Activated CD8-positive, alpha-beta T cell treated with anti-CD3 and anti-CD28 coated beads for 36 hours (primary cell): ENCODE measurements at regions of chr9 and their contacts with region 1.

Region 1: DNA sequence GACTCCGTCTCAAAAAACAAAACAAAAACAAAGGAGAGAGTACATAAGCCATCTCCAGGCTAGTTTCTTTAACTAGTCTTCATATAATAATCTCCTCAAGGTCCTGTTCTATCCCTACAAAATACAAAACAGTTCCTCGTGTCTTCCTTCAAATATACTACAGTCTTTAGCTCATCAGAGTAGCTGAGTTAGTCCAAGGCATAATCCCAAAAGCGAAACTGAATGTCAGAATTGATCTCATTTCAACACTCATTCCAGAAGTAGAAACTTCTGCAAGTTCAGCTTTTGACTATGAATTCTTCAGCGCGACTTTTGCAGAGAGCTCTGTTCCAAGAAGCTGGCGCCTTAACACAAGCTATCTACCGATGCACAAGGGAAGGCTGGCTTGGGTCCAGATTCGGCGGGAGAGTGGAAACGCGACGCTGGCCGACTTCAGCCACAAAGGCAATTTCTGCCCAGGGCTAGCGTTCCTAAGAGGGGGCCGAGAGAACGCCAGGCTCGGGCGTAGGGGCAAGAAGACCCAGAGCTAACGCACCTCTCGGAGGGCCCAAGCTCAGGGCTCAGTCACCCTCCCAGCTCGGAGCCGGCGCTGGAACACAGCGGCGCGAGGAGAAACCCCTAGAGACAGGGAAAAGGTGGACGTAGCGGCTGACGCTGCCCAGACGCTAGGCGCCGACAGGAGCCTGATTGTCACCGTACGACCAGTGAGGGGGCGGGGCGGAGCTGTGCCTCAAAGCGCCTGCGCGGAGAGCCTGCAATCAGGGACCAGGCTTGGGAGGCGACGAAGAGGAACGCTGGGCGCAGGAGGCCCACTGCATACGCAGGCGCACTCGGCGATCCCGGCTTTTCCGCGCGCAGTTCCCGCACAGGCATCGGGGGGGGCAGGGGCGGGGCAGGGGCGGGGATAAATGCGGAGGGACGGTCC is 469 bp upstream of the HSDL2 start:
- DNase-seq: peak; percentile 99
- ATAC-seq: peak; percentile 94
- H3K4me3 Mint-ChIP-seq: peak overlapping the region; percentile 87
- H3K27ac Mint-ChIP-seq: peak overlapping the region; percentile 98
- H3K4me1 Mint-ChIP-seq: peaks cover 32% of the 10 kb centered on the region
- H3K27me3 Mint-ChIP-seq: no peaks in the 10 kb centered on the region
- CTCF ChIP-seq: no peak

Region 2: GRCh38 chr9:112135706-112136105 is 243.7 kb before region 1 on chr9:
- CTCF ChIA-PET with region 1: no interaction called
- POLR2A ChIA-PET with region 1: no interaction called
- intact Hi-C with region 1: no loop called
- DNase-seq: no peak
- ATAC-seq: no peak
- H3K4me3 Mint-ChIP-seq: no peak overlapping the region
- H3K27ac Mint-ChIP-seq: no peak overlapping the region
- H3K4me1 Mint-ChIP-seq: no peaks in the 10 kb centered on the region
- H3K27me3 Mint-ChIP-seq: no peaks in the 10 kb centered on the region
- CTCF ChIP-seq: no peak

Region 3: DNA sequence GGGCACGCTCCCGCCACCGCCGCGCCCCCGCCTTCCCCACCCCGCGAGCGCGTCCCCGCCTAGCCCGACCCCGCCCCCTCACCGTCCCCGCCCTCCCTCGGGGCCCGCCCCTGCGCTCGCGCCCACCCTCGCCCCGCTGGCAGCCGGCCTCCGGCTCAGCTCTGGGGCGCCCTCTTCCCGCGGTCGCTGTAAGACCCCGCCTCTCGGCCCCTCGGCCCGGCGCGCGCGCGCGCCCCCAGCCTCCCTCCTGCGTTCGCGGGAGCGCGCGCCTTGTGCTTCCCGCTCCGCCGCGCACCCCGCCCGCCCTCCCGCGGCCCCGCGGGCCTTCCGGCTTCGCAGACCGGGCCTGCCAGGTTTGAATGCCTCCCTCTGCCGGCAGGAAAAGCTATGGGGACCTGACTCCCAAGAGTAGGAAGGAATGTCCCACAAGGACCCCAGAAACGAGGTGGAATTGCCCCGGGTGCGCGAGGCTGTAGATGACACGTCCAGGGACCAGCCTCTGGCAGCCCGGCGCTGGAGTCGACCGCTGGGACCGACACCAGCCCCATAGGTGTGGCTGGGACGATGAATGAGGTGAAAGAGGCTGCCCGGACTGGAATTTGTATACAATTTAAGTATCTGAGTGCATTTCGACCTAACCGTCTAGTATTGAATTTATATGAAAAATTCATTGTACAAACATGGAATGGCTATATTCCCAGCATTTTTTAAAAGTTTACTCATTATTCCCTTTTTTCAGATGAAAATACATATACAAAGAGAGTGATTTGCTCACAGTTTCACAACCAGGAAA is 45.6 kb before region 1 on chr9:
- CTCF ChIA-PET with region 1: interaction called, 4 read pairs
- POLR2A ChIA-PET with region 1: interaction called, 13 read pairs
- intact Hi-C with region 1: no loop called
- DNase-seq: peak; percentile 94
- ATAC-seq: peak; percentile 88
- H3K4me3 Mint-ChIP-seq: peak overlapping the region; percentile 97
- H3K27ac Mint-ChIP-seq: peak overlapping the region; percentile 98
- H3K4me1 Mint-ChIP-seq: peaks cover 30% of the 10 kb centered on the region
- H3K27me3 Mint-ChIP-seq: no peaks in the 10 kb centered on the region
- CTCF ChIP-seq: peak; percentile 53

Region 4: GRCh38 chr9:112404508-112404932 is 25.1 kb after region 1 on chr9:
- CTCF ChIA-PET with region 1: no interaction called
- POLR2A ChIA-PET with region 1: no interaction called
- intact Hi-C with region 1: no loop called
- DNase-seq: no peak
- ATAC-seq: no peak
- H3K4me3 Mint-ChIP-seq: no peak overlapping the region
- H3K27ac Mint-ChIP-seq: no peak overlapping the region
- H3K4me1 Mint-ChIP-seq: no peaks in the 10 kb centered on the region
- H3K27me3 Mint-ChIP-seq: no peaks in the 10 kb centered on the region
- CTCF ChIP-seq: no peak

Region 5: DNA sequence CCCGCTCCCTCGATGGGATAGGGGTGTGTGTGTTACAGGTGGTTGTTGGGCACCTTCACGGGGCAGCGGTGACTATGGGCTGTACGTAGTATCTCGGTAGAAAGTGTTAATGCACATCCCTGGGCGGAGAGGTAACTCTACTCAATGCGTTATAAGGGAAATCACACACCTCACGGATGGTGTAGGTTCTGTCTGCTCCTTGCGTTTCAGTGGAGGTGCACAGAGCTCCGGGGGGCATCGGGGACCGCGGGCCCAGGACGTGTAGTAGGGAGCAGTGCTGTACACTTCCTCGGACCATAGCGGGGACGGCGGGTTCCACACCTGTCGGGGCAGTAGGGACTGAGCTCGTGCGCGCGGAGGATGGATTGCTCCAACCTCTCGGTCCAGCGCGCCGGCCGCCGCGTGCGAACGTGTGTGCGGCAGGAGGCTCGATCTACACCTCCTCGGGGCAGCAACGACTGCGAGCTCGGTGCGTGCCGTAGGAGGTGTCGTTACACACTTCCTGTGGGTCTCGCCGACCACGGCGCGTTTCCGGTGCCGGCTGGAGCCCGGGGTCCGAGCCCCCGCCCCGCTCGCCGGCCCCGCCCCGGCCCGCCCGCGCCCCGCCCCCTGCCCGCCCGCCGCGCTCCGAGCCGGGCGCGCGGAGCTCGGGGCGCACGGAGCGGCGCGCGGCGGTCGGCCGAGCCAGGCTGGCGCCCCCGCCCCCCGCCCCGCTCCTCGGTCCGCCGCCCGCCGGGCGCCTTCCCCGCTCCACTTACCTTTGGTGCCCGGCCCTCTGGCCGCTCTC is 107.0 kb after region 1 on chr9 and contains the start of gene KIAA1958:
- CTCF ChIA-PET with region 1: no interaction called
- POLR2A ChIA-PET with region 1: interaction called, 11 read pairs
- intact Hi-C with region 1: no loop called
- DNase-seq: peak; percentile 93
- ATAC-seq: peak; percentile 96
- H3K4me3 Mint-ChIP-seq: peak within 1 kb of the TSS; percentile 94
- H3K27ac Mint-ChIP-seq: peak within 1 kb of the TSS; percentile 92
- H3K4me1 Mint-ChIP-seq: peaks cover 36% of the 10 kb centered on the region
- H3K27me3 Mint-ChIP-seq: no peaks in the 10 kb centered on the region
- CTCF ChIP-seq: no peak
- total RNA-seq, gene KIAA1958: 14.9 to 15.3 TPM

Region 6: GRCh38 chr9:112705768-112706427 is 326.5 kb after region 1 on chr9:
- CTCF ChIA-PET with region 1: no interaction called
- POLR2A ChIA-PET with region 1: no interaction called
- intact Hi-C with region 1: loop called (anchors 10 kb)
- DNase-seq: no peak
- ATAC-seq: no peak
- H3K4me3 Mint-ChIP-seq: no peak overlapping the region
- H3K27ac Mint-ChIP-seq: no peak overlapping the region
- H3K4me1 Mint-ChIP-seq: peaks cover 23% of the 10 kb centered on the region
- H3K27me3 Mint-ChIP-seq: no peaks in the 10 kb centered on the region
- CTCF ChIP-seq: no peak